Pancreas (tissue), 10 donors: ENCODE measurements at regions of chr3 and their contacts with region 1.

Region 1: GRCh38 chr3:126679318-126679751 is 24.4 kb upstream of the TXNRD3 start:
- DNase-seq: peak; percentile 57 to 96 (median 85)
- ATAC-seq: peak; percentile 71 to 99 (median 96)
- H3K4me3 ChIP-seq: no peak overlapping the region
- H3K27ac ChIP-seq: no peak overlapping the region
- H3K4me1 ChIP-seq: no peaks in the 10 kb centered on the region
- H3K27me3 ChIP-seq: no peaks in the 10 kb centered on the region
- CTCF ChIP-seq: peak; percentile 96 to 98 (median 98)

Region 2: GRCh38 chr3:126530171-126531050 is 148.9 kb before region 1 on chr3:
- intact Hi-C with region 1: no loop called
- DNase-seq: peak in 4 of 6 donors; percentile 10 to 66 (median 46)
- ATAC-seq: peak in 2 of 4 donors; percentile 36 to 42
- H3K4me3 ChIP-seq: no peak overlapping the region
- H3K27ac ChIP-seq: peak overlapping the region in 1 of 4 donors; percentile 23
- H3K4me1 ChIP-seq: peaks cover 0 to 11% (median 0%) of the 10 kb centered on the region in 3 donors
- H3K27me3 ChIP-seq: no peaks in the 10 kb centered on the region
- CTCF ChIP-seq: no peak

Region 3: DNA sequence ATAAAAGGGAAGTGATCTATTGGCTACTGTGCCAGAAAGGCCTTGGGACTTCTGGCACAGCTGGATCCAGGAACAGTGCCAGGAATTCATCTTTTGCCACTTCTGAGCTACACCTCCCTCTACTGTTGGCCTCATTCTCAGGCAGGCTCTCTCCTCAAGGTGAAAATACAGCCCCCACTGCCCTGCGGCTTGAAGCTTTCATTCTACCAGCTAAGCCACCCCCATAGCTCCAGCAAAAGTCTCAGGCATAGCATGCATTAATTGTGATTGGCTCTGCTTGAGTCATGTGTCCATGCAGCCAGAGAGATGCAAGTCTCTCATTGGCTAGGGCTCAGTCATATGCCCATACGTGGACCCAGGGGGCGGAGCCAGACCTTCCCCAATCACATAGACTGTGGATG is 768.8 kb after region 1 on chr3:
- intact Hi-C with region 1: loop called in 1 of 3 experiments (anchors 5 kb)
- DNase-seq: peak in 2 of 6 donors; percentile 12 to 17
- ATAC-seq: peak in 3 of 4 donors; percentile 32 to 60 (median 38)
- H3K4me3 ChIP-seq: no peak overlapping the region
- H3K27ac ChIP-seq: no peak overlapping the region
- H3K4me1 ChIP-seq: no peaks in the 10 kb centered on the region
- H3K27me3 ChIP-seq: no peaks in the 10 kb centered on the region
- CTCF ChIP-seq: no peak

Region 4: GRCh38 chr3:127467391-127467790 is 788.1 kb after region 1 on chr3:
- intact Hi-C with region 1: loop called in 1 of 3 experiments (anchors 10 kb)
- DNase-seq: no peak
- ATAC-seq: no peak
- H3K4me3 ChIP-seq: no peak overlapping the region
- H3K27ac ChIP-seq: no peak overlapping the region
- H3K4me1 ChIP-seq: no peaks in the 10 kb centered on the region
- H3K27me3 ChIP-seq: no peaks in the 10 kb centered on the region
- CTCF ChIP-seq: no peak

Region 5: GRCh38 chr3:127544192-127544802 is 865.0 kb after region 1 on chr3:
- intact Hi-C with region 1: loop called in 1 of 3 experiments (anchors 10 kb)
- DNase-seq: peak; percentile 51 to 84 (median 74)
- ATAC-seq: peak; percentile 42 to 73 (median 60)
- H3K4me3 ChIP-seq: no peak overlapping the region
- H3K27ac ChIP-seq: no peak overlapping the region
- H3K4me1 ChIP-seq: no peaks in the 10 kb centered on the region
- H3K27me3 ChIP-seq: no peaks in the 10 kb centered on the region
- CTCF ChIP-seq: peak; percentile 75 to 87 (median 78)